IMR-90 (cell line): ENCODE measurements at regions of chr1 and their contacts with region 1.

Region 1: GRCh38 chr1:52127181-52128180 is 14.4 kb upstream of the ZFYVE9 start:
- DNase-seq: peak; percentile 77
- ATAC-seq: peak; percentile 99
- H3K4me3 ChIP-seq: no peak overlapping the region
- H3K27ac ChIP-seq: no peak overlapping the region
- H3K4me1 ChIP-seq: no peaks in the 10 kb centered on the region
- H3K27me3 ChIP-seq: no peaks in the 10 kb centered on the region; the same call in 1 of the 2 replicates
- CTCF ChIP-seq: peak; percentile 87
- POLR2A ChIP-seq: no peak
- RAD21 ChIP-seq: peak; percentile 86

Region 2: GRCh38 chr1:52348704-52349300 is 221.3 kb after region 1 on chr1:
- CTCF ChIA-PET with region 1: interaction called, 10 read pairs
- POLR2A ChIA-PET with region 1: no interaction called
- dilution Hi-C with region 1: no loop called
- in situ Hi-C with region 1: no loop called
- intact Hi-C with region 1: loop called (anchors 2 kb)
- DNase-seq: peak; percentile 44
- ATAC-seq: peak; percentile 86
- H3K4me3 ChIP-seq: no peak overlapping the region
- H3K27ac ChIP-seq: no peak overlapping the region
- H3K4me1 ChIP-seq: no peaks in the 10 kb centered on the region; the same call in 1 of the 2 replicates
- H3K27me3 ChIP-seq: no peaks in the 10 kb centered on the region
- CTCF ChIP-seq: peak; percentile 45
- POLR2A ChIP-seq: no peak
- RAD21 ChIP-seq: peak; percentile 57